GM12878 (cell line): ENCODE measurements at regions of chr1 and their contacts with region 1.

Region 1: DNA sequence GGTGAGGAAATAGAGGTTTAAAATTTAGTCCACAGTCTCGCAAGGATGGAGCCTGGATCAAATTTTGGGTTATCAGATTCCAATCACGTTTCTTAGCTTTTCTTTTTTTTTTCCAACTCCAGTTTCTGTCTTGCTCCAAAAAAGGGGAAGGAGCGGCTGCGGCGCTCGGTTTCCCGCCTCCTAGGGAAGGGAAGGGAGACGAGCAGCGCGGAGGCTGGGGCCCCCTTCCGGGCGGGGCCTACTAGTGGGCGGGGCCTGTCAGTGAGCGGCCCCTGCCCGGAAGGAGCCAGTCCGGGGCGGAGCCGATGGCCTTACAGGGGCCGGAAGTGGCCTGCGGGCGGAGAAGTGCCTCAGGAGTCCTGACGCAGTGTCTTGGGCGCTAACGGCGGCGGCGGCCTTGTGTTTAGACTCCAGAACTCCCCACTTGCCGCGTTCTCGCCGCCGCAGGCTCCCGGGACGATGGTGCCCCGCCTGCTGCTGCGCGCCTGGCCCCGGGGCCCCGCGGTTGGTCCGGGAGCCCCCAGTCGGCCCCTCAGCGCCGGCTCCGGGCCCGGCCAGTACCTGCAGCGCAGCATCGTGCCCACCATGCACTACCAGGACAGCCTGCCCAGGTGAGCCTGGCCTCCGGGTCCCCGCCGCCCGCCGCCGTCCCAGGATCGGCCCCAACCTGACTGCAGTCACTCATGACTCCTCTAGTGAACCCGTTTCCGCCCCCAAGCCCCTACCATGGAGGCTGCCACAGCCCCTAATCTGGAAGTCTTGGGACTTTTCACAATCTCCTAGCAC is at the start of gene CPT2:
- DNase-seq: peak; percentile 48
- ATAC-seq: peak; percentile 100
- H3K4me3 ChIP-seq: peak within 1 kb of the TSS; percentile 72
- H3K27ac ChIP-seq: peak within 1 kb of the TSS; percentile 94
- H3K4me1 ChIP-seq: peaks cover 2% of the 10 kb centered on the region; the same call in 1 of the 2 replicates
- H3K27me3 ChIP-seq: no peaks in the 10 kb centered on the region
- CTCF ChIP-seq: no peak
- EP300 ChIP-seq: no peak
- POLR2A ChIP-seq: peak; percentile 99
- RAD21 ChIP-seq: no peak
- polyA plus RNA-seq, gene CPT2: 10.1 to 10.9 TPM

Region 2: GRCh38 chr1:52904927-52905698 is 291.6 kb before region 1 on chr1:
- CTCF ChIA-PET with region 1: no interaction called
- POLR2A ChIA-PET with region 1: no interaction called
- RAD21 ChIA-PET with region 1: no interaction called
- SMC1A ChIA-PET with region 1: no interaction called
- in situ Hi-C with region 1: loop called (anchors 25 kb)
- intact Hi-C with region 1: no loop called
- DNase-seq: no peak
- ATAC-seq: peak; percentile 94
- H3K4me3 ChIP-seq: no peak overlapping the region
- H3K27ac ChIP-seq: no peak overlapping the region
- H3K4me1 ChIP-seq: no peaks in the 10 kb centered on the region
- H3K27me3 ChIP-seq: no peaks in the 10 kb centered on the region
- CTCF ChIP-seq: peak; percentile 55 to 58 (median 56)
- EP300 ChIP-seq: no peak
- POLR2A ChIP-seq: no peak
- RAD21 ChIP-seq: peak; percentile 53

Region 3: GRCh38 chr1:53182111-53182593 is 14.5 kb before region 1 on chr1:
- CTCF ChIA-PET with region 1: interaction called, 32 read pairs
- POLR2A ChIA-PET with region 1: no interaction called
- RAD21 ChIA-PET with region 1: interaction called, 5 read pairs
- SMC1A ChIA-PET with region 1: interaction called, 4 read pairs
- in situ Hi-C with region 1: no loop called
- intact Hi-C with region 1: no loop called
- DNase-seq: peak; percentile 20
- ATAC-seq: peak; percentile 94
- H3K4me3 ChIP-seq: no peak overlapping the region
- H3K27ac ChIP-seq: no peak overlapping the region
- H3K4me1 ChIP-seq: no peaks in the 10 kb centered on the region
- H3K27me3 ChIP-seq: no peaks in the 10 kb centered on the region; a peak in 1 of 4 replicates
- CTCF ChIP-seq: peak; percentile 79 to 93 (median 81)
- EP300 ChIP-seq: no peak
- POLR2A ChIP-seq: no peak
- RAD21 ChIP-seq: peak; percentile 62

Region 4: GRCh38 chr1:53220171-53220961 is 23.7 kb after region 1 on chr1 and contains the start of gene CZIB:
- CTCF ChIA-PET with region 1: interaction called, 4 read pairs
- POLR2A ChIA-PET with region 1: interaction called, 6 read pairs
- RAD21 ChIA-PET with region 1: no interaction called
- SMC1A ChIA-PET with region 1: interaction called, 4 read pairs
- in situ Hi-C with region 1: no loop called
- intact Hi-C with region 1: loop called (anchors 2 kb)
- DNase-seq: peak; percentile 75
- ATAC-seq: peak; percentile 96
- H3K4me3 ChIP-seq: peak within 1 kb of the TSS; percentile 80
- H3K27ac ChIP-seq: peak within 1 kb of the TSS; percentile 95
- H3K4me1 ChIP-seq: 0 out of 2 replicates have a peak, but pooled peaks cover 4% of the 10 kb centered on the region
- H3K27me3 ChIP-seq: no peaks in the 10 kb centered on the region
- CTCF ChIP-seq: no peak
- EP300 ChIP-seq: no peak
- POLR2A ChIP-seq: peak; percentile 99
- RAD21 ChIP-seq: no peak
- polyA plus RNA-seq, gene CZIB: 55.1 to 68.3 TPM

Region 5: GRCh38 chr1:53349968-53350852 is 153.5 kb after region 1 on chr1:
- CTCF ChIA-PET with region 1: no interaction called
- POLR2A ChIA-PET with region 1: no interaction called
- RAD21 ChIA-PET with region 1: no interaction called
- SMC1A ChIA-PET with region 1: no interaction called
- in situ Hi-C with region 1: no loop called
- intact Hi-C with region 1: no loop called
- DNase-seq: no peak
- ATAC-seq: no peak
- H3K4me3 ChIP-seq: no peak overlapping the region
- H3K27ac ChIP-seq: no peak overlapping the region
- H3K4me1 ChIP-seq: peaks cover 8% of the 10 kb centered on the region
- H3K27me3 ChIP-seq: no peaks in the 10 kb centered on the region
- CTCF ChIP-seq: no peak
- EP300 ChIP-seq: no peak
- POLR2A ChIP-seq: no peak
- RAD21 ChIP-seq: no peak

Region 6: DNA sequence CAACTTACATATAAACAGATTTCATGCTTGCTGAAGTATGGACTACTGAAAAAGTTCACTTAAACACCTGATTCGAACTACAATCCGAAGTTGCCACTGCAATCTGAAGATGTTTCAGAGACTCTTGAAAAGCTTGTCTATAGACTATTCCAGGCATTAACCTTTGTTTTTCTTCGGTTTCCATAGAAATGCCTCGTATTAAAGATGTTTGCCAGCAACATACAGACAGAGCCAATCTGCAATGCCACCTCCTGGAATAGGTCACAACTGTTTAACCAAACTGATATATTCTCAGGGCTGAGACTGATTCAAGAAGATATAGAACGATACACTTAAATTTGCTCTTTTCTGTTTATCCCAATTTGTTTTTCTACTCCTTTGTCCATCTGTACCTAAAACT is 233.6 kb after region 1 on chr1:
- CTCF ChIA-PET with region 1: no interaction called
- POLR2A ChIA-PET with region 1: no interaction called
- RAD21 ChIA-PET with region 1: no interaction called
- SMC1A ChIA-PET with region 1: no interaction called
- in situ Hi-C with region 1: no loop called
- intact Hi-C with region 1: no loop called
- DNase-seq: no peak
- ATAC-seq: no peak
- H3K4me3 ChIP-seq: no peak overlapping the region
- H3K27ac ChIP-seq: no peak overlapping the region
- H3K4me1 ChIP-seq: no peaks in the 10 kb centered on the region
- H3K27me3 ChIP-seq: peaks cover 0 to 1% of the 10 kb centered on the region in 2 experiments; a peak in 2 of 4 replicates
- CTCF ChIP-seq: no peak; a peak in 1 of 6 replicates
- EP300 ChIP-seq: no peak
- POLR2A ChIP-seq: no peak
- RAD21 ChIP-seq: no peak